Esophagus muscularis mucosa (tissue), 4 donors: ENCODE measurements at regions of chr19 and their contacts with region 1.

Region 1: GRCh38 chr19:35856546-35857149 is at the start of gene KIRREL2:
- DNase-seq: no peak
- H3K4me3 ChIP-seq: peak within 1 kb of the TSS; percentile 49 to 61 (median 54)
- H3K27ac ChIP-seq: no peak within 1 kb of the TSS
- H3K4me1 ChIP-seq: peaks cover 14 to 25% (median 20%) of the 10 kb centered on the region in 4 donors
- H3K27me3 ChIP-seq: peaks cover 4 to 97% (median 40%) of the 10 kb centered on the region in 4 donors
- CTCF ChIP-seq: no peak
- EP300 ChIP-seq: no peak
- POLR2A ChIP-seq: no peak
- total RNA-seq, gene KIRREL2: not detected

Region 2: DNA sequence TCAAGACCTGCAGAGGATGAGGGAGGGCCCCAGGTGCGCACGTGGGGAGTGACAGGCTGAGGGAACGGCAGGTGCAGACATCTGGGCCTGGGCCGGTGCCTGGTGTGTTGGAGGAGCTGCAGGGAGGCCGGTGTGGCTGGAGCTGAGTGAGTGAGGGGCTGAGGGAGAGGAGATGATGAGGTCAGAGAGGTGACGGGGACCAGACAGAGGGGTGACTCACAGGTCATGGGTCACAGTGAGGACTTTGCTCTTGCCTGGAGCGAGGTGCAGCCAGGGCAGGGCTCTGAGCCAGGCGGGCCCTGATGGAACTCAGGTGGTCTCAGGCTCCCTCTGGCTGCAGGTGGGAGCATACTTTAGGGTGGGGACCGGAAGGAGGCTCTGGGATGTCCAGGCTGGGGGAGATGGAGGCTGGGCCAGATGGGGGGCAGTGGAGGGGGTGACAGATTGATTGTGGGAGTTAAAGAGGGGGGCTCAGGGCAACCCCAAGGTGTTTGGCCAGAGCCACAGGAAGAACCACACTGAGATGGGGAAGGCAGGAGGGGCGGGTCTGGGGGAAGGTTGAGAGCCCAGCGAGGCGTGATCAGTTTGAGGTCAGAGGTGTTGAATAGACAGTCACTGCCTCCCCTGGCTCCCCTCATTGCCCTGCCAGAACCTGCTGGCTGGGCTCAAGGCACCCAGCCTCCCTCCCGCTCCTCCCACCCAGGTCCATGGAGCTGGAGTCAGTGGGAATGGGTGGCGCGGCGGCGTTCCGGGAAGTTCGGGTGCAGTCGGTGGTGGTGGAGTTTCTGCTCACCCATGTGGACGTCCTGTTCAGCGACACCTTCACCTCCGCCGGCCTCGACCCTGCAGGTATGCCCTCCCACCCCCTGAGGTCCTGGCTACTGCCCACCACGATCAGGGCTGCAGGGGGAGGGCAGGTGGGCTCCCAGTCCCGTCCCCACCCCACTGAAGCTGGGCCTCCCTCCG is 72.9 kb before region 1 on chr19:
- intact Hi-C with region 1: loop called (anchors 10 kb)
- DNase-seq: no peak
- H3K4me3 ChIP-seq: no peak overlapping the region
- H3K27ac ChIP-seq: no peak overlapping the region
- H3K4me1 ChIP-seq: no peaks in the 10 kb centered on the region
- H3K27me3 ChIP-seq: no peaks in the 10 kb centered on the region
- CTCF ChIP-seq: no peak
- EP300 ChIP-seq: no peak
- POLR2A ChIP-seq: no peak